PC-9 (cell line): ENCODE measurements at regions of chr1 and their contacts with region 1.

Region 1: GRCh38 chr1:39653546-39654031 is 14.1 kb upstream of the HEYL start:
- DNase-seq: peak in 1 of 2 experiments; percentile 74
- H3K4me3 ChIP-seq: no peak overlapping the region
- H3K27ac ChIP-seq: no peak overlapping the region
- H3K4me1 ChIP-seq: no peaks in the 10 kb centered on the region
- H3K27me3 ChIP-seq: no peaks in the 10 kb centered on the region
- CTCF ChIP-seq: peak; percentile 92

Region 2: DNA sequence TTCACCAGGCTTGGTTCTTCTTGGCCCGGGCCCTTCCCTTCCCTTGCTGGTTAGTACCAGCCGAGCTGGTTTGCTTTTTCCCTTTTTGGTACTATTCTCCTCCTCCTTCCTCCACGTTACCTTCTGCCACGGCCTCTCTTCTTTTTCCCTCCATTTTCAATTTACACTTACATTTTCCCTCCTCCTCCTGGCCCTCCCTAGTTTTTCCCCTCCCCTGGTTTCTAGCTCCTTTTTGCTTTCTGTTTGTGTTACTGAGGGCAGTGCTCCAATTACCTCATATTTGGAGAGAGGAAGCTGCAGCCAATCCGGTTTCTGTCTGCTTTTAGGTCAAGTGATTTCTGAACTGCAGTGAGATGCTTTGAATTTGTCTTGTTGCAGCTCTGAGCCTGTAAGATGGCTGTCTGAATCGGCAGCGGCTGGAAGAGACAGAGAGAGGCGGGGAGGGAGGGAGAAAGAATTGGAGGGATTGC is 385.4 kb before region 1 on chr1:
- CTCF ChIA-PET with region 1: no interaction called
- POLR2A ChIA-PET with region 1: no interaction called
- intact Hi-C with region 1: loop called (anchors 10 kb)
- DNase-seq: no peak
- H3K4me3 ChIP-seq: no peak overlapping the region
- H3K27ac ChIP-seq: no peak overlapping the region
- H3K4me1 ChIP-seq: no peaks in the 10 kb centered on the region
- H3K27me3 ChIP-seq: no peaks in the 10 kb centered on the region
- CTCF ChIP-seq: no peak

Region 3: DNA sequence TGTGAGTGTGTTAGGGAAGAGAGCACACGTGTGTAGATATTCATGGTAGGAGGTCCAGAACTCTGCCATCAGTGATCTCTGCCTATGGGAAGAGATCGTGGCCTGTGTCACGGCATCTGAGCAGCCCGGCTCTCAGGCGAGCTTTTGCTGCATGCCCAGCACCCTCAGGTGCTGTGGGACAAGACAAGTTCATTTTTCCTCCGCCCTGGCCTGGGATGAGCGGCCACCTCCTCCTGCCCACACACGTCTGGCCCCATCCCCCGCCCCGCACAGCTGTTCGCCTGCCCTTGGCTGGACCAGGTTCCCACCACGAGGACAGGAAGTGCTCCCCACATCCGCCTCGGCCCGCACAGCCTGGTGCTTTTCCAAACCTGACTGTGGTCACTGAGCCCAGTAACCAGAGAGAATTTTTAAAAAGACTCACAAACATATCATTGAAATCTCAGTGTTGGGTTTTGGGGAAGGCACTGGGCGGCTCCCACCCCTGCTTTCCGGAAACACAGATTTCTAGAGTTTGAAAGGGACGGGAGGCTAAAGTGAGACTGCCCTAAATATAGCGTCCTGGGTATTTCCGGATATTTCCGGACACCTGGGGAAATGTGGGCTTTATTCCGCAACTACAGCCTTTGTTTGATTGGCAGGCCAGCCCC is 144.1 kb before region 1 on chr1:
- CTCF ChIA-PET with region 1: no interaction called
- POLR2A ChIA-PET with region 1: no interaction called
- intact Hi-C with region 1: loop called (anchors 10 kb)
- DNase-seq: no peak
- H3K4me3 ChIP-seq: no peak overlapping the region
- H3K27ac ChIP-seq: no peak overlapping the region
- H3K4me1 ChIP-seq: peaks cover 5% of the 10 kb centered on the region; the same call in 1 of the 2 replicates
- H3K27me3 ChIP-seq: no peaks in the 10 kb centered on the region
- CTCF ChIP-seq: no peak

Region 4: DNA sequence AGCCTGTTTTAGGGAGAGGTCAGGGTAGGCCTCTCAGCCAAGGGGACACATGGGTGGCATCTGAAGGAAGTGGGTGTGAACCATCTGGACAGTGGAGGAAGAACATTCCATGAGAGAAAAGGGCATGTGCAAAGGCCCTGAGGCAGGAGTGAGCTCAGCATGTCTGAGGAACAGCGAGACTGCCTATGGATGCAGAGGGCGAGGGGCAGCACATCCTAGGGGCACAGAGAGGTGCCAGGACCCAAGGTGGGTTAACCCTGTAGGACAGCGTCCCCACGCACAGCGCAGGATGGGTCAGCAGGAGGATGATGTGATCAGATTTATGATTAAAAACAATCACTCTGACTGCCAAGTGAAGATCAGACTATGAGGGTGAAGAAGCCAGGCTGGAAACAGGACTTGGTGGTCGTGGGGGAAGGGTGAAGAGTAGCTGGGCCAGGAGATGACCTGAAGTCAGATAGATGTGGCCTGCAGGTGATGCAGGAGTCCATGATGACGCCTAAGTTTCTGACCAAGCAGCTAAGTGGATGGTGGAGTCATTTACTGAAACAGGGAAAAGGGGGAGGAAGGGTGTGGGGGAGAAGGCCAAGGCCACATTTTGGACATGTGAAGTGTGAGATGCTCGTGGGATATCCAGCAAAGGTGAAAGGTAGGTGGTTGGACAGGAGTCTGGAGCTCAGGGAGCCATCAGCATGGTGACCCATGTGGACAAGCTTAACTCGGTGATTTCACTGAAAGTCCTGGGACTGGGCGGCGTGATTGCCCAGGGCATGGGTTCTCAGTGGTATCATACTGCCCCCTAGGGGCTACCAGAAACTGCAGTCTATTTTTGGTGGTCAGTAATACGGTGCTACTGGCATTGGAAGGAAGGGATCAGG is 114.8 kb before region 1 on chr1:
- CTCF ChIA-PET with region 1: interaction called, 3 read pairs
- POLR2A ChIA-PET with region 1: no interaction called
- intact Hi-C with region 1: loop called (anchors 10 kb)
- DNase-seq: peak in 1 of 2 experiments; percentile 60
- H3K4me3 ChIP-seq: no peak overlapping the region
- H3K27ac ChIP-seq: no peak overlapping the region
- H3K4me1 ChIP-seq: no peaks in the 10 kb centered on the region
- H3K27me3 ChIP-seq: no peaks in the 10 kb centered on the region
- CTCF ChIP-seq: peak; percentile 86

Region 5: GRCh38 chr1:39575191-39576015 is 78.2 kb before region 1 on chr1:
- CTCF ChIA-PET with region 1: no interaction called
- POLR2A ChIA-PET with region 1: no interaction called
- intact Hi-C with region 1: loop called (anchors 2 kb)
- DNase-seq: peak in 1 of 2 experiments; percentile 33
- H3K4me3 ChIP-seq: peak overlapping the region; percentile 76
- H3K27ac ChIP-seq: 0 out of 2 replicates have a peak overlapping the region, but pooled peaks have one; percentile 39
- H3K4me1 ChIP-seq: peaks cover 26% of the 10 kb centered on the region
- H3K27me3 ChIP-seq: no peaks in the 10 kb centered on the region
- CTCF ChIP-seq: no peak

Region 6: GRCh38 chr1:39672551-39672947 is 19.0 kb after region 1 on chr1:
- CTCF ChIA-PET with region 1: interaction called, 16 read pairs
- POLR2A ChIA-PET with region 1: interaction called, 10 read pairs
- intact Hi-C with region 1: no loop called
- DNase-seq: no peak
- H3K4me3 ChIP-seq: no peak overlapping the region
- H3K27ac ChIP-seq: no peak overlapping the region
- H3K4me1 ChIP-seq: peaks cover 13% of the 10 kb centered on the region
- H3K27me3 ChIP-seq: peaks cover 27% of the 10 kb centered on the region
- CTCF ChIP-seq: peak; percentile 37; the same call in 1 of the 2 replicates

Region 7: DNA sequence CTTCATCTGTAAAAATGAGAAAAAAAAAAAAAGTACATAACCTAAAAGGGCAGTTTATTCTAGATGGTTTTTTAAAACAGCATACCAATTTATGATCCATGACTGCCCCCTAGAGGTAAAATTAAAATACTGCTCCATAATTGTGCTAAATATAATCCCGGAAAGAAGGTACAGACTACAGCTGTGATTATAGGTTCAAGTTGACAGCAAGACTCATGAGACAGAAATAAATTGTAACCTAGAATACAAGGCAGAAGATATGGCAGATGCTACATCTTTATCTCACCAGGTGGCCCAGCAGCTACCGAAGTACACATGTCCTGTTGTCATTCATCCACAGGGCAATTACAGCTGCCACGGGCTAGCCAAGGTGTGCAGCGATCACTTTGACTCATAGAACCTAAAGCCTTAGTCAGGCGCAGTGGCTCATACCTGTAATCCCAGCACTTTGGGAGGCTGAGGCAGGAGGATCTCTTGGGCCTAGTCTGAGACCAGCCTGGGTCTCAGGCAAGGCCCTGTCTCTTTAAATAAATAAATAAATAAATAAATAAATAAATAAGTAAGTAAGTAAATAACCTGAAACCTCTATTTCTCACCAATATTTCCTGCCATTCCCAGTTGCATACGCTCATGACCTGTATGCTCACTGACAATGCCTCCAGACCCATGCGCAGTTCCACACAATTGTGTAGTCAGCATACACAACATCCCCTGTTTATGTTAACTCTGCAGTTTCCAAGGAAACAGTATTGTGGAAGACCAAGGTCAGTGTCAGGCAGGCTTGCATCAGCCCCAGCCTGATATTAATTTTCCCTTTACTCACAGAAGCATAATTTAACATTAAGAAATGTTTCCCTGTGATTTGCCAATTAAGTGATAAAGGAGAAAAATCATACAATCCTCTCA is 66.8 kb after region 1 on chr1:
- CTCF ChIA-PET with region 1: interaction called, 20 read pairs
- POLR2A ChIA-PET with region 1: no interaction called
- intact Hi-C with region 1: loop called (anchors 5 kb)
- DNase-seq: peak; percentile 6 to 61
- H3K4me3 ChIP-seq: no peak overlapping the region
- H3K27ac ChIP-seq: no peak overlapping the region
- H3K4me1 ChIP-seq: no peaks in the 10 kb centered on the region
- H3K27me3 ChIP-seq: peaks cover 5% of the 10 kb centered on the region; the same call in 1 of the 2 replicates
- CTCF ChIP-seq: peak; percentile 89